ENCODE measurements at regions of chr10 and their contacts with region 1.

Region 1: GRCh38 chr10:69004821-69005220 is 16.2 kb downstream of the KIFBP start:
- DNase-seq: no peak
- H3K4me3 ChIP-seq: no peak overlapping the region
- H3K27me3 ChIP-seq: no peaks in the 10 kb centered on the region
- CTCF ChIP-seq: peak; percentile 52

Region 2: DNA sequence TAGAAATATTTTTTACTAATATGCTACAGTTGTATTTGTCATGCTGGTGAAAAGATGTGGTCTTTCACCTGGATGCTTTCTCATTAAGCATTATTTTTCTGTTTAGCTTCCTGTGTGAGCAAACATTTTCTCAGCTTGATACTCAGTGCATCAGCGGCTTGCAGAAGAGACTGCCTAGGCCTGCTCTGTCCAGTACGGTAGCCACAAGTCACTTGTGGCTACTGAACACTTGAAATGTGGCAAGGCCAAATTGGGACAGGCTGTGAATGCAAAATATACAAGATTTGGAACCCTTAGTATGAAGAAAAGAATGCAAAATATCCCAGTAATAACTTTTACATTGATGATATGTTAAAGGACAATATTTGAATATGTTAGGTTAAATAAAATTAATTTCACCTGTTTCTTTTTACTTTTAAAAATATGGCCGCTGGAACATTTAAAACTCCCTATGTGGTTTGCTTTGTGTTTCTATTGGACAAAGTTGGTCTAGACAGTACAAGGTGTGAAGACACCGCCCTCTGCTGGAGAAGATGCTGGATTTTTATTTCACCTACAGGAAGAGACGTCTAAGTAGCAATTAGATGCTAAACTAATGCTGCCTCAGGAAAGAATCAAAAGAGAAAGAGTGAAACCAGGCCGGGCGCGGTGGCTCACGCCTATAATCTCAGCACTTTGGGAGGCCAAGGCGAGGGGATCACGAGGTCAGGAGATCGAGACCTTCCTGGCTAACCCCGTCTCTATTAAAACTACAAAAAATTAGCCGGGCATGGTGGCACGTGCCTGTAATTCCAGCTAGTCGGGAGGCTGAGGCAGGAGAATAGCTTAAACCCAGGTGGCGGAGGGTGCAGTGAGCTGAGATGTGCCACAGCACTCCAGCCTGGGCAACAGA is 88.4 kb after region 1 on chr10:
- CTCF ChIA-PET with region 1: interaction called, 65 read pairs
- POLR2A ChIA-PET with region 1: no interaction called
- DNase-seq: peak; percentile 27
- H3K4me3 ChIP-seq: no peak overlapping the region
- H3K27me3 ChIP-seq: no peaks in the 10 kb centered on the region
- CTCF ChIP-seq: peak; percentile 72